ENCODE measurements at regions of chr14 and their contacts with region 1.

Region 1: DNA sequence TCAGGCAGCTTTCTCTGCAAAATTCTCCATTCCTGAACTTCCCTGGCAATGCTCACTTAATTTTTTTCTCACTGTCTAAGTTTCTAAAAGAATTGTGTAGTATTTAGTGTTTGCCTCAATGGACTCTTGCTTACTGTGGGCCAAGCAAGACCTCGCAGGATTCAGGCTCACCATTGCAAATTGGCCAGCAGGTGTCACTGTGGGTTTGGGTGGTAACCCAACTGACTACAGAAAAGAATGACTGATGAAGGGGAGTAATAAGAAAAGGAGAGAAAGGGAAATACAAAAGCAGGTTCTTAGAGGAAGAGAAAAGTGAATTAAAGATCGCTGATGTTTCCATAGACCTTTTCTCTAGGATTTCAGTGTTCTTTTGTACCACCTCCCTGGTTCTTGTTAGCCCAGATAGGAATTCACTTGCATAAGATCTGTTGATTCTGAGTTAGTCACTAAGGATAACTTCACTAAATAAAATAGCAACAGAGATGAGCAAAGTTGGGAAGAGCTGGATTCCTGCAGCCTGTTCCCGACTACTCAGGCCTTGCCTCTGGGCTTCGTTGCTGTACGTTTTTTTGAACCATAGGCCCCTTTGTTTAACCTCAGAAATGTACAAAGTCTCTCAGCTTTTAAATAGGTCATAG is 386.5 kb upstream of the DDHD1 start:
- DNase-seq: no peak
- H3K4me3 ChIP-seq: no peak overlapping the region
- H3K27ac ChIP-seq: peak overlapping the region; percentile 28
- H3K4me1 ChIP-seq: peaks cover 18% of the 10 kb centered on the region
- H3K27me3 ChIP-seq: no peaks in the 10 kb centered on the region
- CTCF ChIP-seq: peak; percentile 49 to 74 (median 72)
- POLR2A ChIP-seq: no peak

Region 2: GRCh38 chr14:54040846-54041245 is 501.2 kb after region 1 on chr14:
- intact Hi-C with region 1: no loop called
- DNase-seq: no peak
- H3K4me3 ChIP-seq: no peak overlapping the region
- H3K27ac ChIP-seq: no peak overlapping the region
- H3K4me1 ChIP-seq: no peaks in the 10 kb centered on the region
- H3K27me3 ChIP-seq: no peaks in the 10 kb centered on the region
- CTCF ChIP-seq: no peak
- POLR2A ChIP-seq: no peak

Region 3: GRCh38 chr14:54175298-54175942 is 635.8 kb after region 1 on chr14:
- intact Hi-C with region 1: loop called (anchors 10 kb)
- DNase-seq: no peak
- H3K4me3 ChIP-seq: no peak overlapping the region
- H3K27ac ChIP-seq: peak overlapping the region; percentile 51
- H3K4me1 ChIP-seq: peaks cover 50% of the 10 kb centered on the region
- H3K27me3 ChIP-seq: no peaks in the 10 kb centered on the region
- CTCF ChIP-seq: peak; percentile 60 to 85 (median 61)
- POLR2A ChIP-seq: no peak

Measured in vagina (tissue), 2 donors.